H1 (cell line): ENCODE measurements at regions of chr6 and their contacts with region 1.

Region 1: GRCh38 chr6:54255886-54256285 is 52.4 kb upstream of the TINAG start:
- DNase-seq: no peak
- H3K4me3 ChIP-seq: no peak overlapping the region
- H3K27ac ChIP-seq: no peak overlapping the region
- H3K4me1 ChIP-seq: peaks cover 0 to 3% (median 0%) of the 10 kb centered on the region in 4 experiments; a peak in 1 of 7 replicates
- H3K27me3 ChIP-seq: no peaks in the 10 kb centered on the region
- CTCF ChIP-seq: no peak
- EP300 ChIP-seq: no peak
- POLR2A ChIP-seq: no peak
- RAD21 ChIP-seq: no peak

Region 2: DNA sequence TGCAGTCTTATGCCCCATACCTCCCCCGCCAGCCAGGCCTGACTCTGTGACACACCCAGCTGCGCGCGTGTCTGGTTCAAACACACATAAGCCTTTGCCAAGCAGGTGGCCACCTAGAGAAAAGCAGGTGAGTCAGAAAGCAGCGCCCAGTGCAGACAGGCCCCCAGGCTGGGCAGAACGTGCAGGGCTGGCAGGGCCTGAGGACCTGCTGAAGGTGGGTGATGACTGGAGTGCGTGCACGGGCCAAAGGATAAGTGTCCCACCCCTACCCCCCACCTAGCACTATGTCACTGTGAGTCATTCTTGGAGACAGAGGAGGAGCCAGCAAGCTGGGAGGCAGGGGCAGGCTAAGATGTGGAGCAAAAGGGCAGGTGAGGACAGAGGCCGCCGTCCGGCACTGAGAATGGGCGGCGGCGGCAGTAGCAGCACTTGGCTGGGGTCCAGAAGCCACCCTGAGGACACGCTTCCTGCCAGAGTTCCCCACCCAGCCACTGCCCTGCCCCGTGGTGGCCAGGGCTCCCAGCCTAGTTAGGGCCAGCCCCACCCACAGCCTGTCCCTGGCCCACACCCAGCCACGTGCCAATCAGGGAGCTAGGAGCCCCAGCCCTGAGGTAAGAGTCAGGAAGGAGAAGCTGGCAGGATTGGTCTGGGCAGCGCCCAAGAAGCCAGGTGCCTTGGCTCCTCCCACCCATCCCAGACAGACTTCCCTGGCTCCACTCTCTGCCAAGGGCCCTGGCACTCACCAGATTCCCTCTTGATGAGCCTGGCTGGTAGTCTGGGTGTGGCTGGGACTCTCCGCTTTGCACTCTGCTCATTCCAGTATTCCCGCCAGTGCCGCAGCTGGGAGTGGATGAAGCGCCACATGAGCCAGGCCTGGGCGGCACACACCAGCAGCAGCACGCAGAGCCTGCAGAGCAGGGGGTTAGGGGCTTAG is 1751.8 kb before region 1 on chr6:
- CTCF ChIA-PET with region 1: no interaction called
- POLR2A ChIA-PET with region 1: no interaction called
- DNase-seq: no peak
- H3K4me3 ChIP-seq: no peak overlapping the region
- H3K27ac ChIP-seq: no peak overlapping the region; the same call in 1 of the 2 replicates
- H3K4me1 ChIP-seq: peaks cover 0 to 5% (median 2%) of the 10 kb centered on the region in 4 experiments; a peak in 4 of 7 replicates
- H3K27me3 ChIP-seq: no peaks in the 10 kb centered on the region
- CTCF ChIP-seq: no peak
- EP300 ChIP-seq: no peak
- POLR2A ChIP-seq: no peak
- RAD21 ChIP-seq: no peak

Region 3: DNA sequence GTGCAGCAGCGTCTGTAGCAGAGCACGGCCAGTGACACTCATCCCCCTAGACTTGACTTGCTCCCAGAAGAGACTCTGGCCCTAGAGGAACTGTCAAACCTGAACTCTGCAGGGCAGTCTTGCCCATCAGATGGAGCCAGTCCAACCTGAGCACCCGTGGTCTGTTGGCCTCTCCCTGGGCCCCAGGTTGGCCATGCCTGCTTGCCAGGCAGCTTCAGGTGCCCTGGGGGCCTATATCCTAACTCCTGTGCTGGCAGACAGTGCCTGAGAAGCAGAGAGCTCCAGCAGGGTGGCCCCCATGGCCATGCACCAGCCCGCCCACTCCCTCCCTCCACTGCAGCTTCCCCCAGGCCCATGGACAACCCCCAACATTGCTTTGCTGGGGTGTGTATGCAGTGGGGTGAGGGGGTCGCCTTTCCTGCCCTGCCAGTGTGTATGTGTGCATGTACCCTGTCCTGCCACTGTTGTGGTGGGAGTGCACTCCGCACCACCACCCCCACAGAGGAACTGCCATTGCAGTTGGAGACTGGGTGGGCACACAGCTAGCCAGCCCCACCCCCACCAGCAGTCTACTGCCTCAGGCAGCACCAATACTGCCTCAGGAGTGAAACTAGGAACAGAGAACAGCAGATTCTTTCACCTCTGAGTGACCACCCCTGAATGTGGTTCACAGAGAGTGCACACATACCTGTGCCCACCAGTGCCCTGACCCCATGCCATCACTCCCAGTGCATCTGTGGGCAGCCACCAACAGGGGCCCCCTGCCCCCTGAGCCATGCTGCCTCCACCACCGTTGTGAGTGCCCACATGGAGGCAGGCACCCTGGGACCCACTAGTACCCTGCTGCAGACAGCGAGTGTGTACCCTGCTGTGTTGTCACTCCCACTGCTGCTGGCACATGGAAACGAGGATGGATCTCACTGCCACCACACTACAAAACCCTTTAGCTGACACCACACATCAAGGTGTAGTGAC is 310.0 kb before region 1 on chr6:
- CTCF ChIA-PET with region 1: no interaction called
- POLR2A ChIA-PET with region 1: no interaction called
- DNase-seq: no peak
- H3K4me3 ChIP-seq: no peak overlapping the region
- H3K27ac ChIP-seq: no peak overlapping the region
- H3K4me1 ChIP-seq: peaks cover 0 to 2% (median 0%) of the 10 kb centered on the region in 4 experiments; a peak in 1 of 7 replicates
- H3K27me3 ChIP-seq: no peaks in the 10 kb centered on the region
- CTCF ChIP-seq: no peak
- EP300 ChIP-seq: no peak
- POLR2A ChIP-seq: no peak
- RAD21 ChIP-seq: no peak

Region 4: DNA sequence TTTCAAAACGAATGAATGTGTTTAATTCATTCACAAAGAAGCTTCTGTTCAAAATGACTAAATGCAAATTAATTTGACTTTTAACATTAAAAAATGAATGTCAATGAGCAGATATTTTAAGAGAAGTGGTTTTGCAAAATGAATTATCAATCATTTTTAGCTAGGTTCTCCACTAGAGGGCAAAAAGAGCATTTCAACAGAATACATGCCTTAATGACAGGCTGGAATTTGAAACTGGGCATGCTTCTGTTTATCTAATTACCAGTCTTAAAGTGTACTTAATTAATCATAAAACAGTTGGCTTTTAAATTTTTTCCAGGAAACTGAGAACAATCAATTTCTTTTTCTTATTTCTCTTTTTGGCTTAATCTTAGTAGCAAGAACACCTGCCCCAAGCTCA is 11.5 kb before region 1 on chr6:
- CTCF ChIA-PET with region 1: interaction called, 20 read pairs
- POLR2A ChIA-PET with region 1: no interaction called
- DNase-seq: no peak
- H3K4me3 ChIP-seq: no peak overlapping the region
- H3K27ac ChIP-seq: no peak overlapping the region
- H3K4me1 ChIP-seq: no peaks in the 10 kb centered on the region
- H3K27me3 ChIP-seq: no peaks in the 10 kb centered on the region
- CTCF ChIP-seq: peak in 2 of 3 experiments; percentile 26 to 51; a peak in 2 of 4 replicates
- EP300 ChIP-seq: no peak
- POLR2A ChIP-seq: no peak
- RAD21 ChIP-seq: peak; percentile 38 to 43